Psoas muscle (tissue), 8 donors: ENCODE measurements at regions of chr5 and their contacts with region 1.

Region 1: DNA sequence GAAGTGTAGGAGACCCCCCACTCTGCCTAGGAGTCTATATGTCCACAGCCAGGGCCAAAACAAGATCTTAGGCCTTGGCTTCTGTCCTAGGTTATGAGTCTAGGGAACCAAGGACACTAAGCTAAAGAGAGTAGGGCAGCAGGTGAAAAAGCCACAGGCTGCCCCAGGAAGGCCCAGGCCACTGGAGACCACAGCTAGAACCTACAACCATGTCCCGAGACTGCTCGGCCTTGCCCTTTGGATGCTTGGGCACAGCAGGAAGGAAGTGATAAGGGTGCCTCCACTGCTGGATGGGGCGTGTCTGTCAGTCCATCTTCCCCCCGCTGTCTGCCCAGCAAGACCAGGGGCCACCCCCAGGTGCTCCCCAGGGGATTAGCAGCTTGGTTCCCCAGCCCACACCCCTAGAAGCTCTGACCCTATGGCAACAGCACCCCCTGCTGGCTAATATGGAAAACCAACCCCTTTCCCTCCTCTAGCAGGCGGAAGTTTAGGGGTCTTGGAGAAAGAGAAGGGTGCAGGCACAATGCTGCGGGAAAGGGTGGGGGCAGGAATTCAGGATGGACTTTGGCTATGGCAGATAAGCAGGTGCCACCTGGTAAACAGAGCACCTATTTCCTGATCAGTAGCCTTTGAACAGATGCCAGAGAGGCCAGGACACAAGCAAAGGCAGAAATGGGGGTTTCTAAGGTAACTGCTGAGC is 10.5 kb upstream of the IRF1 start:
- DNase-seq: peak; percentile 53 to 79
- ATAC-seq: peak; percentile 43 to 69 (median 54)
- H3K4me3 ChIP-seq: no peak overlapping the region
- H3K27ac ChIP-seq: no peak overlapping the region
- H3K4me1 ChIP-seq: peaks cover 20% of the 10 kb centered on the region
- H3K27me3 ChIP-seq: no peaks in the 10 kb centered on the region
- CTCF ChIP-seq: peak; percentile 89

Region 2: GRCh38 chr5:132180134-132180745 is 320.8 kb before region 1 on chr5:
- intact Hi-C with region 1: loop called (anchors 5 to 10 kb)
- DNase-seq: no peak
- ATAC-seq: peak; percentile 46 to 83 (median 64)
- H3K4me3 ChIP-seq: no peak overlapping the region
- H3K27ac ChIP-seq: no peak overlapping the region
- H3K4me1 ChIP-seq: no peaks in the 10 kb centered on the region
- H3K27me3 ChIP-seq: no peaks in the 10 kb centered on the region
- CTCF ChIP-seq: peak; percentile 76

Region 3: GRCh38 chr5:132238169-132238744 is 262.8 kb before region 1 on chr5:
- intact Hi-C with region 1: loop called in 1 of 2 experiments (anchors 1 kb)
- DNase-seq: peak; percentile 70 to 78
- ATAC-seq: peak; percentile 64 to 91 (median 76)
- H3K4me3 ChIP-seq: no peak overlapping the region
- H3K27ac ChIP-seq: no peak overlapping the region
- H3K4me1 ChIP-seq: no peaks in the 10 kb centered on the region
- H3K27me3 ChIP-seq: no peaks in the 10 kb centered on the region
- CTCF ChIP-seq: peak; percentile 81

Region 4: GRCh38 chr5:132272311-132273210 is 228.5 kb before region 1 on chr5:
- intact Hi-C with region 1: loop called (anchors 5 kb)
- DNase-seq: peak; percentile 70 to 75
- ATAC-seq: peak; percentile 41 to 86 (median 70)
- H3K4me3 ChIP-seq: no peak overlapping the region
- H3K27ac ChIP-seq: no peak overlapping the region
- H3K4me1 ChIP-seq: no peaks in the 10 kb centered on the region
- H3K27me3 ChIP-seq: no peaks in the 10 kb centered on the region
- CTCF ChIP-seq: peak; percentile 90

Region 5: DNA sequence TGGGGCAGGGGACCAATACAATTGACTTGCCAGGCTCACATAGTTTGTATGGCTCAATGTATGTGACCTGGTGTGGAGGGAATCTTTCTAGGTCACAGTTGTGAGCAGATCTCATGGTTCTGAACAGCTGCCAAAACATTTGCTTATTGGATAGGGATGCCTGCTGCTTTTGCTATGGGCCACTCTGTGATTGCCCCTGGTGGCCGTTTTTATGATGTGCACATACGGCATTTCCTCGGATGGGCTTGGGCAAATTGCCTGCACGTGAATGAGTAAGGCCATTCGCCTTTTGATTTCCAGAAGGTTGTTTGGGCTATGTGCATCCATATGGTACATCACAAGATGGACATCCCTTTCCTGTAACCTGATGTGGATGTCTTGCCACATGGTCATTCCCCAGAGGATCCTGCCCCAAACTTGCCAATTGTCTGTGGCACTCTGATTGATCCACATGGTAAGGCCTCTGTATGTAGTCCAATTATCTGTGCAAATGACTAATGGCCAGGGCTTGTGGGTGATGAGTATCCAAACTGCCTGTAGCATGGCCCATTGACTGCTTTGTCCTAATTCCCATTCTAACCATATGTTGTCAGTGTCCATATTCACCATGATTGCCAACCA is 217.5 kb before region 1 on chr5:
- intact Hi-C with region 1: no loop called
- DNase-seq: no peak
- ATAC-seq: peak; percentile 47 to 74 (median 64)
- H3K4me3 ChIP-seq: no peak overlapping the region
- H3K27ac ChIP-seq: no peak overlapping the region
- H3K4me1 ChIP-seq: no peaks in the 10 kb centered on the region
- H3K27me3 ChIP-seq: no peaks in the 10 kb centered on the region
- CTCF ChIP-seq: peak; percentile 45

Region 6: DNA sequence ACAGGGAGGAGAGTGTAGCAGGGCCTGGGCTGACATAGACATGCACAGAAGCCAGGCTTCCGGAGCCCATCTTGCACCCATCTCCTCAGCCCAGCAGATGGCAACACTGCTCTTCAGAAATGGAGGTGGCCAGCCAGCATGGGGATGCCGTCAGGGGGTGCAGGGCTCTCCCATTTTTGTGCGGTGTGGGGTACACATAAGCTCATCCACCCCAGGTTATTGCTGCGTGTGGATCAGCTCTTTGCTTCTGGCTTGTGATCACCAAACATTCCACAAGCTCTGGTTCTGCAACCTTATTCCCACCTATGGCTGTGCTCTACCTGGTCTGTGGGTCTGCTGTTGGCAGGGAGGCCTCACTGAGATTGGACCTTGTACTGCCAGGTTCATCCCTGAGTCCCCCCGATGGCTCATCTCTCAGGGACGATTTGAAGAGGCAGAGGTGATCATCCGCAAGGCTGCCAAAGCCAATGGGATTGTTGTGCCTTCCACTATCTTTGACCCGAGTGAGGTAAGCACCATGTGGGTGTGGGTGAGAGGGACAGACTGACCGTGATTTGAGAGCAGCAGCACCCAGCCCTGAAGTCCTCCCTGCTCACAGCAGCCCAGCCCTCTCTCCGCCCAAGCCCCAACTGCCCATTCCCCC is 114.3 kb before region 1 on chr5:
- intact Hi-C with region 1: loop called (anchors 2 kb)
- DNase-seq: peak; percentile 69 to 79
- ATAC-seq: peak; percentile 57 to 72 (median 68)
- H3K4me3 ChIP-seq: no peak overlapping the region
- H3K27ac ChIP-seq: peak overlapping the region; percentile 59
- H3K4me1 ChIP-seq: peaks cover 39% of the 10 kb centered on the region
- H3K27me3 ChIP-seq: no peaks in the 10 kb centered on the region
- CTCF ChIP-seq: peak; percentile 63

Region 7: GRCh38 chr5:132419502-132420468 is 81.3 kb before region 1 on chr5:
- intact Hi-C with region 1: loop called in 1 of 2 experiments (anchors 2 kb)
- DNase-seq: peak; percentile 69 to 83
- ATAC-seq: peak; percentile 59 to 78 (median 72)
- H3K4me3 ChIP-seq: no peak overlapping the region
- H3K27ac ChIP-seq: peak overlapping the region; percentile 66
- H3K4me1 ChIP-seq: peaks cover 93% of the 10 kb centered on the region
- H3K27me3 ChIP-seq: no peaks in the 10 kb centered on the region
- CTCF ChIP-seq: peak; percentile 80